ENCODE measurements at regions of chr12 and their contacts with region 1.

Region 1: DNA sequence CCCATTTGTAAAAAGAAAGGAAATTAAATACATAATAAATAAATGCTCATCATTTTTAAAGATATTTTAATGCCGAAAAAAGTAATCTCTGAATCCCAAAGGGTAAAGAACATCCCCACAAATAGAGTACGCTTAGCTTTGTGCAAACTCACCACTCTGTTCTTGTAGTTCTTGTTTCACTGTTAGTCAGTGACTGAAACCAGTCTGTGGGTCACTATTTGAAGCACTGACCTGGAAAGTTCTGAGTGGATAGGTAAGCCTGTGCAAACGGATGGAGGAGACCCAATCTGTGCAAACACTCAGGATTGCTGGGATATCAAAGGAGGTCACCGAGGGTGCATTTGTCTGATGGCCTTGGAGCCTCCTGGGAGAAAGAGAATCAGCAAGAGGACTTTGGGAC is 68.1 kb upstream of the TSPAN11 start:
- DNase-seq: no peak
- ATAC-seq: no peak

Region 2: GRCh38 chr12:30286345-30286926 is 572.0 kb before region 1 on chr12:
- intact Hi-C with region 1: no loop called
- DNase-seq: no peak
- ATAC-seq: no peak

Region 3: GRCh38 chr12:30985814-30986452 is 127.5 kb after region 1 on chr12:
- intact Hi-C with region 1: loop called (anchors 5 kb)
- DNase-seq: peak; percentile 76
- ATAC-seq: peak; percentile 82

Measured in sciatic nerve (tissue), 2 donors.